Esophagus squamous epithelium (tissue), 5 donors: ENCODE measurements at regions of chr1 and their contacts with region 1.

Region 1: GRCh38 chr1:214923278-214923915 is 159.1 kb upstream of the KCNK2 start:
- DNase-seq: no peak
- H3K4me3 ChIP-seq: no peak overlapping the region
- H3K27ac ChIP-seq: no peak overlapping the region
- H3K4me1 ChIP-seq: no peaks in the 10 kb centered on the region
- H3K27me3 ChIP-seq: no peaks in the 10 kb centered on the region
- CTCF ChIP-seq: no peak
- POLR2A ChIP-seq: no peak

Region 2: GRCh38 chr1:213399695-213400094 is 1523.7 kb before region 1 on chr1:
- intact Hi-C with region 1: loop called (anchors 10 kb)
- DNase-seq: no peak
- H3K4me3 ChIP-seq: no peak overlapping the region
- H3K27ac ChIP-seq: no peak overlapping the region
- H3K4me1 ChIP-seq: no peaks in the 10 kb centered on the region
- H3K27me3 ChIP-seq: no peaks in the 10 kb centered on the region
- CTCF ChIP-seq: no peak
- POLR2A ChIP-seq: no peak

Region 3: GRCh38 chr1:214990619-214991018 is 67.2 kb after region 1 on chr1:
- intact Hi-C with region 1: no loop called
- DNase-seq: no peak
- H3K4me3 ChIP-seq: no peak overlapping the region
- H3K27ac ChIP-seq: no peak overlapping the region
- H3K4me1 ChIP-seq: no peaks in the 10 kb centered on the region
- H3K27me3 ChIP-seq: no peaks in the 10 kb centered on the region
- CTCF ChIP-seq: no peak
- POLR2A ChIP-seq: no peak

Region 4: DNA sequence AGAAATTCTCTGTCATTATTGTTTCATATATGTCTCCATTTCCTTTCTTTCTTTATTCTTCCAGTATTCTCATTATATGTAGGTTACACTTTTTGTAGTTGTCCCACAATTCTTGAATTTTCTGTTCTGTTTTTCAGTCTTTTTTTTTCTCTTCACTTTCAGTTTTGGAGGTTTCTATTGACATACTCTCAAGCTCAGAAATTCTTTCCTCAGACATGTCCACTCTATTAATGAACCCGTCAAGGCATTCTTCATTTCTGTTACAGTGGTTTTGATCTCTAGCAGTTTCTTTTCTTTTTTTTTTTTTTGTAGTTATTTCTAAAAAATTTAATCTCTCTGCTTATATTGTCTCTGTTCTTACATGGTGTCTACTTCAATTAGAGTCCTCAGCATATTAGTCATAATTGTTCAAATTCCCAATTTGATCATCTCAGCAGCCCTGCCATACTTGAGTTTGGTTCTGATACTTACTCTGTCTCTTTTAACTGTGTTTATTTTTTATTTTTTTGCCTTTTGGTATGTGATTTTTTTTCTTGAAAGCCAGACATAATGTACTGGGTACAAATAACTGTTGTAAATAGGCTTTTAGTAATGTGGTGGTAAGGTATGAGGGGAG is 109.6 kb after region 1 on chr1:
- intact Hi-C with region 1: no loop called
- DNase-seq: no peak
- H3K4me3 ChIP-seq: no peak overlapping the region
- H3K27ac ChIP-seq: no peak overlapping the region
- H3K4me1 ChIP-seq: no peaks in the 10 kb centered on the region
- H3K27me3 ChIP-seq: no peaks in the 10 kb centered on the region
- CTCF ChIP-seq: no peak
- POLR2A ChIP-seq: no peak